ENCODE measurements at regions of chr5 and their contacts with region 1.

Region 1: GRCh38 chr5:65809817-65810531 is 88.0 kb downstream of the NLN start:
- DNase-seq: peak; percentile 68 to 74
- H3K4me3 ChIP-seq: no peak overlapping the region
- H3K27ac ChIP-seq: no peak overlapping the region
- H3K4me1 ChIP-seq: peaks cover 0 to 13% (median 3%) of the 10 kb centered on the region in 4 donors
- H3K27me3 ChIP-seq: no peaks in the 10 kb centered on the region
- CTCF ChIP-seq: no peak

Region 2: DNA sequence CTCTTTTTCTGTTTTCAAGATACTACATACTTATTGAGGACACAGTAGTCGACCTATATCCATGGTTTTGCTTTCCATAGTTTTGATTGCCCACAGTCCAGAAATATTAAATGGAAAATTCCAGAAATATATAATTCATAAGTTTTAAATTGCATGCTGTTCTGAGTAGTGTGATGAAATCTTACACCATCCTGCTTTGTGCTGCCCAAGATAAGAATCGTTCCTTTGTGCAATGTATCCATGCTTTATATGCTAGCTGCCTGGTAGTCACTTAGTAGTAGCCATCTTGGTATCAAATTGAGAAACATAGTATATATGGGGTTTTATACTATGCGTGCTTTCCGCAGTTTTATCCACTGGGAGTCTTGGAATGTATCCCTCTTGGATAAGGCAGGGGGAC is 982.3 kb before region 1 on chr5:
- intact Hi-C with region 1: loop called (anchors 5 kb)
- DNase-seq: no peak
- H3K4me3 ChIP-seq: no peak overlapping the region
- H3K27ac ChIP-seq: no peak overlapping the region
- H3K4me1 ChIP-seq: no peaks in the 10 kb centered on the region
- H3K27me3 ChIP-seq: no peaks in the 10 kb centered on the region
- CTCF ChIP-seq: no peak

Region 3: DNA sequence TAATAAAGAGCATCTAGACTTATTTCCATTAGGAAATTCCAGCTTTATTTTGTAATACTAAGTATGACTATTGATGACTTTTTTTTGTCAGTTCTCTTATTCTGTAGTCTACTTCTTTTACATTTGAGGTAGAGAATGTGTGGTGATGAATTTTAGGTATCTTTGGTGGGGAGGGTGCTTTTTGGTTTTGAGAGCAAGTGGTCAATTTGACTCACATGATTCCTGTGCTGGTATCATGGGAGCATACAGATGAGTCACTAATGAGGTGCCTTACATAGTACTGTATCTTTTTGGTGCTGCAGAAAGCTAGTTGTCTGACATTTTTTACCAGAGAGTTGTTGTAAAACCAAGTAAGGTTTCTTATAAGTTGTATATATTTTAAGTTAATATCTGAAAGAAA is 151.7 kb after region 1 on chr5:
- intact Hi-C with region 1: no loop called
- DNase-seq: no peak
- H3K4me3 ChIP-seq: no peak overlapping the region
- H3K27ac ChIP-seq: no peak overlapping the region
- H3K4me1 ChIP-seq: peaks cover 0 to 37% (median 1%) of the 10 kb centered on the region in 4 donors
- H3K27me3 ChIP-seq: no peaks in the 10 kb centered on the region
- CTCF ChIP-seq: no peak